Heart left ventricle (tissue), 16 donors: ENCODE measurements at regions of chr4 and their contacts with region 1.

Region 1: GRCh38 chr4:24912252-24913118 is at the start of gene CCDC149:
- DNase-seq: peak; percentile 74 to 85 (median 77)
- ATAC-seq: peak; percentile 74 to 91 (median 90)
- H3K4me3 ChIP-seq: peak within 1 kb of the TSS; percentile 45 to 93 (median 66)
- H3K27ac ChIP-seq: peak within 1 kb of the TSS; percentile 79 to 98 (median 91)
- H3K4me1 ChIP-seq: peaks cover 0 to 21% (median 8%) of the 10 kb centered on the region in 12 donors
- H3K27me3 ChIP-seq: no peaks in the 10 kb centered on the region
- CTCF ChIP-seq: peak in 7 of 12 donors; percentile 6 to 38 (median 21)
- POLR2A ChIP-seq: peak in 1 of 2 donors; percentile 32
- total RNA-seq, gene CCDC149: 5.8 to 14.7 (median 10.3) TPM

Region 2: DNA sequence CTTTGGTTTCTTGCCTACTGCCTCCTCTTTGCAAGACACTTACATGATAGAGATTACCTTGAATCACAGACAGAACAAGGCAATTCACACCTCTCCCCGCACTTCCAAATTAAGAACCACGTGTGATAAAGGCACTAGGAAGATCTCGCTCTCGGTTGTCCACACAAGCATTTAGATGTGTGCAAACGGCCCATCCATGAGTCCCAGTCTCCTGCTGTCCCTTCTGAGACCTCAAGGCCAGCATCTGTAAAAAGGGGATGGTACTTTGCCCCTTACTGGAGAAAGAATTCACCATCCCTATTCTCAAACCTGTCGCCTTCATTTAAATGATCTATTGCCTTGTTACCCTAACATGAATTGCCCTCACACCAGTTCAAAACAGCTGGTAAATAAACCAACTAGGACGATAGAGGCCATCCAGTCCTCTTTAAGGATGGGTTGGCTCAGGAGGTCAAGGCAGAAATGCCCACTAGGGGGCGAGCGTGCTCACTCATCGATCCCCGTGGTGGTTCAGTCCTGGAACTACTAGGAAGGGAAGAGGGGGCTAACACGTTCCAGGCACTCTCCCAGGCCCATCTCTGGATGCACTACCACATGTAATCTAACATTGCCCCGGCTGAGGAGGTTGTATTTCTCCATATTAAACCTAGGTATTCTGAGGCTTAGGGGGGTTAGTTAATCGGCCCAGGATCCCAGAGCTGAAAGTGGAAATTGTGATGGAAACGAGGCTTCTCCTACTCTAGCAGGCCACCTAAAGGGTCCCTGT is 423.9 kb before region 1 on chr4:
- intact Hi-C with region 1: loop called in 2 of 10 experiments (anchors 2 to 10 kb)
- DNase-seq: peak; percentile 57 to 84 (median 66)
- ATAC-seq: peak; percentile 56 to 85 (median 80)
- H3K4me3 ChIP-seq: no peak overlapping the region
- H3K27ac ChIP-seq: peak overlapping the region in 1 of 12 donors; percentile 27
- H3K4me1 ChIP-seq: peaks cover 0 to 9% (median 0%) of the 10 kb centered on the region in 12 donors
- H3K27me3 ChIP-seq: no peaks in the 10 kb centered on the region
- CTCF ChIP-seq: peak; percentile 64 to 88 (median 80)
- POLR2A ChIP-seq: no peak

Region 3: GRCh38 chr4:24514803-24515202 is 397.7 kb before region 1 on chr4:
- intact Hi-C with region 1: no loop called
- DNase-seq: no peak
- ATAC-seq: no peak
- H3K4me3 ChIP-seq: no peak overlapping the region
- H3K27ac ChIP-seq: no peak overlapping the region
- H3K4me1 ChIP-seq: peaks cover 0 to 27% (median 16%) of the 10 kb centered on the region in 12 donors
- H3K27me3 ChIP-seq: no peaks in the 10 kb centered on the region
- CTCF ChIP-seq: peak in 4 of 12 donors; percentile 8 to 24 (median 12)
- POLR2A ChIP-seq: no peak

Region 4: DNA sequence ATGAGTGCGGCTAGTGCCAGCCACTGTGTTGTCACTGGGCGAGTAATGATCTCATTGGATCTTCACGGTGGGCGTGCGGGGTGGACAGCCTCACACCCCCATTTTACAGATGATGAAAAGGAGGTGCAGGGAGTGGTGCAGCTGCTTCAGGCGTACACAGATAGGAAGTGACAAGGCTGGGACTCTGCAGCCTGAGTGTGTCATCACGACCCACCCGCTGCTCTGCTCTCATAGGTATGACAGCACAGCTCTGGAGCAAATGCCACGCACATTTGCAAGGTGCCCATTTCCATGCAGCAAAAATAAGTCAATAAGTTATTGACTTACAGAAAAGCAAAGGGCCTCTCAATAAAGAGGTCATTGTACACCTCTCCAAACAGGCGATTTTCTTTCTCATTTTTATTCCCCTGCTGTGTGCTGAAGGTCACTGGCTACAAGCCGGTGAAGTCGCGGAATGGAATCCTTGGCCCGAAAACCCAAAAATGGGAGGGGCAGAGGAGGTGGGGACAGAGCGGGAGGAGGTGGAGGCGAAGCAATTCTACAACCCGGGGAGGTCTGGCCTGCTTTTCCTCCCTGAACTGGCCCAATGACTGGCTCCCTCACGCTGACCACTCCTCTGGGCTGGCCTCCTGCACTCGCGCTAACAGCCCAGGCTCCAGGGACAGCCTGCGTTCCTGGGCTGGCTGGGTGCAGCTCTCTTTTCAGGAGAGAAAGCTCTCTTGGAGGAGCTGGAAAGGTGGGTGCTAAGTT is 117.4 kb before region 1 on chr4 and contains the start of gene SOD3:
- intact Hi-C with region 1: loop called in 1 of 10 experiments (anchors 5 kb)
- DNase-seq: peak; percentile 86 to 90 (median 88)
- ATAC-seq: peak; percentile 96 to 97 (median 96)
- H3K4me3 ChIP-seq: peak within 1 kb of the TSS in 11 of 12 donors; percentile 1 to 60 (median 45)
- H3K27ac ChIP-seq: peak within 1 kb of the TSS; percentile 53 to 92 (median 82)
- H3K4me1 ChIP-seq: peaks cover 0 to 34% (median 14%) of the 10 kb centered on the region in 12 donors
- H3K27me3 ChIP-seq: peaks cover 0 to 14% (median 6%) of the 10 kb centered on the region in 9 donors
- CTCF ChIP-seq: no peak
- POLR2A ChIP-seq: peak in 1 of 2 donors; percentile 63
- total RNA-seq, gene SOD3: 17.0 to 110 (median 43.0) TPM

Region 5: GRCh38 chr4:24885342-24885741 is 27.1 kb before region 1 on chr4:
- intact Hi-C with region 1: no loop called
- DNase-seq: no peak
- ATAC-seq: peak in 2 of 4 donors; percentile 20 to 36
- H3K4me3 ChIP-seq: no peak overlapping the region
- H3K27ac ChIP-seq: no peak overlapping the region
- H3K4me1 ChIP-seq: peaks cover 0 to 11% (median 0%) of the 10 kb centered on the region in 12 donors
- H3K27me3 ChIP-seq: no peaks in the 10 kb centered on the region
- CTCF ChIP-seq: no peak
- POLR2A ChIP-seq: no peak

Region 6: DNA sequence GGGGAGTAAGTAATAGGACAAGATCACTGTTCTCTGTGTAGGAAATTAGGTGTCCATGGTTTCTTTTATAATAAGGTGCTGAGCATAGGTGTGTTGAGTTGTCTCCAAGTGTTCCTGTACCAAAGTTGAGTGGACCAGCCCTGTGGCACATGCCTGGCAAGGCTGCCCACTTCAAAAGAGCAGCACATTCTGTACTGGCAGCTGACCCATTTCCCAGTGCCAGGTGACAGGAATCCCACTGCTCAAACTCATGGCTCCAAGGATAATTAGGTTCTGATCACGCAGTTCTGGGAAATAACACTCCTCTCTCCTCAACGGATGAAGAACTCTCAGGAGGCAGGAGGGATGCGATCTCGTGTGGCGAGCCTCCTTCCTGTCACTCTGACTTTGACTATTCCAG is 131.1 kb after region 1 on chr4:
- intact Hi-C with region 1: loop called in 2 of 10 experiments (anchors 5 to 10 kb)
- DNase-seq: no peak
- ATAC-seq: peak in 1 of 4 donors; percentile 58
- H3K4me3 ChIP-seq: no peak overlapping the region
- H3K27ac ChIP-seq: no peak overlapping the region
- H3K4me1 ChIP-seq: no peaks in the 10 kb centered on the region
- H3K27me3 ChIP-seq: no peaks in the 10 kb centered on the region
- CTCF ChIP-seq: no peak
- POLR2A ChIP-seq: no peak

Region 7: DNA sequence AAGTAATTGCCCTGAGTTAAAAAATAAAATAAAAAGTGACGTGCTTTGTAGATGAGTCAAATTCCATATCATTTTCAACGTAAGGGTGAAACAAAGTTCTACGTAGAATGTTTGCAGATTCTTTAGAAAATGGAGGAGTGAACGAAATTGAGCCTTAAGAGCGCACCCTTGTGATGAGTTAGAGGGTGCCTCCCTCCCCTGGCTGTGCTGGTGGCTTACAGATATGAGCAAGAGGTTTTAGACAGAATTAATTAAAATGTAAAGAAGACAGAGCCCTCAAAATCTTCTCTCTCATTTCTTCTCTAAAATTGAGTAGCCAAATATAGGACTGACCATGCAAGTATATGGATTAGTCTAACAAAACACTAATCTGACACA is 148.5 kb after region 1 on chr4:
- intact Hi-C with region 1: no loop called
- DNase-seq: no peak
- ATAC-seq: peak in 2 of 4 donors; percentile 8 to 24
- H3K4me3 ChIP-seq: no peak overlapping the region
- H3K27ac ChIP-seq: peak overlapping the region in 9 of 12 donors; percentile 29 to 64 (median 38)
- H3K4me1 ChIP-seq: peaks cover 0 to 20% (median 0%) of the 10 kb centered on the region in 12 donors
- H3K27me3 ChIP-seq: no peaks in the 10 kb centered on the region
- CTCF ChIP-seq: peak in 2 of 12 donors; percentile 8 to 20
- POLR2A ChIP-seq: no peak

Region 8: DNA sequence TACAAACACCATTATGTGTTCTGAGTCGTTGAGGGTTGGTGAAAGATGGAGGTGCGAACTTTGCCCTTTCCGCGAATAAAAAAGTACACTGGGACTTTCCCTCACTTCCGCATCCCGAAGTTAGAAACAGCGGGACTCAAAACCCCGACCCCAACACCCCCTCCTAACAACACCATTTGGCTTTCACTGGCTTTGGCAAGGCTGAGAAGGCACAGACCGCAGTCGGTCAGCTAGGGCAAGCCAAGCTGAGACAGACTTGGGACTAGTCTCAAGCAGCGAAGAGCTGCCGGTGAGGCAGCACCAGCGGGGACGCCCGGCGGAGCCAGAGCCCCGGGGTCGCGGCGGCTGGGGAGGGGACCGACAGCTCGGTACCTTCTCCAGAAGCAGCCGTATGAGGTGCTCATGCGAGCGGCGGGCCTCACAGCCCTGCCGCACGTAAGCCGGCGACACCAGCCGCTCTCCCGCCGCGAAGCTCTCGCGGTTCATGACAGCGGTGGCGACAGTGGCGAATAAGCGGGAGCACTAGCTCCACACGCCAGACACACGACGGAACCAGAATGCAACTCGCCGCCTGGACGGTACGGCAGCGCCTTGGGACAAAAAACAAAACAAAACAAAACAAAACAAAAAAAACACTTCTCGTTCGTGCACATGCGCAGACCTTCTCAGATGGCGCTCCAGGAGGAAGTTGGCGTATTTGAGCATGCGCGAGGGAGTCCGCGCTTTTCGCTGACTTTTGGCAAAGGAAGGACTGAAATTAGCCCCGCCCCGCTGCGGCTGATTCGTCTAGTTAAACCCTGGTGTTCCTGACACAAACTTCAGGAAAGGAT is 247.6 kb after region 1 on chr4 and contains the start of gene SEPSECS:
- intact Hi-C with region 1: loop called in 1 of 10 experiments (anchors 10 kb)
- DNase-seq: peak; percentile 98 to 99 (median 98)
- ATAC-seq: peak; percentile 91 to 96 (median 93)
- H3K4me3 ChIP-seq: peak within 1 kb of the TSS; percentile 59 to 96 (median 82)
- H3K27ac ChIP-seq: peak within 1 kb of the TSS; percentile 83 to 98 (median 92)
- H3K4me1 ChIP-seq: peaks cover 0 to 37% (median 15%) of the 10 kb centered on the region in 12 donors
- H3K27me3 ChIP-seq: no peaks in the 10 kb centered on the region
- CTCF ChIP-seq: peak in 1 of 12 donors; percentile 23
- POLR2A ChIP-seq: no peak
- total RNA-seq, gene SEPSECS: 3.2 to 7.6 (median 6.2) TPM

Region 9: DNA sequence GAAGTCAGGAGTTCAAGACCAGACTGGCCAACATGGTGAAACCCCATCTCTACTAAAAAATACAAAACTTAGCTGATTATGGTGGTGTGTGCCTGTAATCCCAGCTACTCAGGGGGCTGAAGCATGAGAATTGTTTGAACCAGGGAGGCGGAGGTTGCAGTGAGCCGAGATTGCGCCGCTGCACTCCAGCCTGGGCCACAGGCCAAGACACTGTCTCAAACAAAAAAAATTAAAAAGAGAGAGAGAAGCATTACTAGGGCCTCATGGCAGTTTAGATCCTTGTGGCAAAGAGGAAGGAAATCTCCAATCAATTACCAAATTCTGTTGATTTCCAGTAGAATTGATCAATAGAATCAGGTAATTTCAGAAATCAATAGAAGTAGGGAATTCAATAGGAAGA is 726.3 kb after region 1 on chr4:
- intact Hi-C with region 1: no loop called
- DNase-seq: no peak
- ATAC-seq: no peak
- H3K4me3 ChIP-seq: no peak overlapping the region
- H3K27ac ChIP-seq: no peak overlapping the region
- H3K4me1 ChIP-seq: no peaks in the 10 kb centered on the region
- H3K27me3 ChIP-seq: no peaks in the 10 kb centered on the region
- CTCF ChIP-seq: no peak
- POLR2A ChIP-seq: no peak